ENCODE measurements at regions of chr7 and their contacts with region 1.

Region 1: DNA sequence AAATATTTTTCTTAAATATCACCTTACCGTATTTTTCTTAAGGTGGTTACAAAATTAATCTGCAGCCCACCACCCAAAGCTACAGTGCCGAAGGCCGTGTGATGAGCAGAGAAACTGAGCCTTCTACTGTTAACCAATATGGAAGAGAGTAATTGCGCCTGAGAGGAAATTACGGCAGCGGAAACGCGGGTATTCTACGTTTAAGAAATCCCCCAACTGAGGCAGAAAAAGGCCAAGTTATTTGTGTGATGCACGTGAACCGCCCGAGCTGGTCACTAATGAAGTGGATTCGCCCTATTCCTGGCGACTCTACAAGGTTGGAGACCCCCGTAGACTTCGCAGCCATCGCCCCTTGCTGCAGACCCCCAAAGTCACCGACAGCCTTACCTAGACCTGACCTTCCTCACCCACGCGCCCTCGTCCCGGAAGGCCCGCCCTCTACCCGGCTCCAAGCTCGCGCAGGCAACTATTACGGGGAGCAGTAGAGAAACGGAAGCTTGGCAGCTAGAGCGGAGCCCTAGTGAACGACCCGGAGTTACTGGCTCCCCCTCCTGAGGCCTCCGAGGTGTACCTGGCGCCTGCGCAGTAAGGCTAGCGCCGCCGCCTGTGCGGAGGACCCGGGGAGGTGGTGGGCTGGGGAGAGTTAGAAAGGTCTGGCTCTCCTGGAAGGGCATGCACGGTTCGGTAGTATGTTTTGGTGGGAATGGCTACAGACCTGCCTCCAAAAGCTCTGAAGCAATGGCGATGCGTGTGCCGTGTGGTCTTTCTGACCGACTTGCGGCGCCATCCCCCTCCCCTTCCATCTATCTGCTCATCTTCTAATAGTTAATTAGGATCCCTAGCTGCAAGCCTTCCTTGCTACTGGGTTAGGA is at the start of gene MRPS33:
- DNase-seq: peak; percentile 95
- ATAC-seq: peak; percentile 100
- total RNA-seq, gene MRPS33: 125 TPM

Region 2: DNA sequence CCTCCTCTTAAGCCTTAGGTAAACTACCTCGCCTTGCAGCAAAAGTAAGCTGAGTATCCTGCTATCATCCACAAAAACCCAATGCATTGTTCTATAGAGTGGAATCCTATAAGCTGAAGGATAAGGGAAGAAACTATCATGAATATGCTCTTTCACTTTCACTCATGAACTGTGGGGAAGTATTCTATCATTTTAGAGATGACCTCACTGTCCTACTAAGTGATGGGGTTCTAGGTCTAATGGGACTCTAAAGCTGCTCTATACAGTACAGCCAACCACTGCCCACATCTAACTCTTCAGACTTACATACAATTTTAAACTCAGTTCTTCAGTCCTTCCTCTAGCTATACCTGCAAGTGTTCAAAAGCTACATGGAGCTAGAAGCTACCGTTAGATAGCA is 551.6 kb before region 1 on chr7:
- intact Hi-C with region 1: no loop called
- DNase-seq: no peak
- ATAC-seq: no peak

Region 3: DNA sequence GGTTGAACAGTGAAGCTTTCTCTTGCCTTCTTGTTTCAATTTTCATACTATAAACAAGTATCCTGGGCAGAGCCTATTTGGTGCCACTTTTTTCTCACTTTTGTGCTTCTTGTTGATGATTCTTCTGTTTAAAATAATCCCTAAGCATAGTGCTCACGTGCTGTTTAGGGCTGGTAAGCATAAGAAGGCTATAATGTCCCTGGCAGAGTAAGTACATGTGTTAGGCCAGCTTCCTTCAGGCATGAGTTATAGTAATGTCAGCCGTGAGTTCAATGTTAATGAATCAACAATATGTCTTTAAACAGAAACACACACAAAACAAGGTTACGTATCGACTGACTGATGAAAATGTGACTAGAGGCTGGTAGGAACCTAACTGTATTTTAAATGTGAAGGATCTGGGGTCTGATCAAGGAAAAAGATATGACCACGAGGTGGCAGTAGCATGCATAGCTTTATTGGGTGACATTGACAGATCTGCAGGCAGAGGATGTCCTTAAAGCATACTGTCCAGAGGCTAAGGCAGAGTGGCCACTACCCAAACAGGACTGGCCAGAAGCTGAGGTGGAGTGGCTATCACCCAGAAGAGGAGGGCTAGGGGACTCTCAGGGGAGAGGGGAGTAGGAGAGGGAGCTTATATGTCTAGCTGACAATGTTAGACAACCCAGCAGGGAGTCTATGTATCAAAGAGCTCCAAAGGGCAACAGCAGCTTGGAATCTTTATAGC is 203.8 kb before region 1 on chr7:
- intact Hi-C with region 1: loop called (anchors 5 kb)
- DNase-seq: no peak
- ATAC-seq: peak; percentile 92